ENCODE measurements at regions of chr19 and their contacts with region 1.

Region 1: GRCh38 chr19:1799695-1800342 is 12.3 kb downstream of the ATP8B3 start:
- DNase-seq: no peak
- H3K4me3 ChIP-seq: no peak overlapping the region
- H3K27ac ChIP-seq: no peak overlapping the region
- H3K4me1 ChIP-seq: no peaks in the 10 kb centered on the region
- H3K27me3 ChIP-seq: peaks cover 0 to 15% of the 10 kb centered on the region in 2 donors
- CTCF ChIP-seq: no peak
- POLR2A ChIP-seq: no peak

Region 2: DNA sequence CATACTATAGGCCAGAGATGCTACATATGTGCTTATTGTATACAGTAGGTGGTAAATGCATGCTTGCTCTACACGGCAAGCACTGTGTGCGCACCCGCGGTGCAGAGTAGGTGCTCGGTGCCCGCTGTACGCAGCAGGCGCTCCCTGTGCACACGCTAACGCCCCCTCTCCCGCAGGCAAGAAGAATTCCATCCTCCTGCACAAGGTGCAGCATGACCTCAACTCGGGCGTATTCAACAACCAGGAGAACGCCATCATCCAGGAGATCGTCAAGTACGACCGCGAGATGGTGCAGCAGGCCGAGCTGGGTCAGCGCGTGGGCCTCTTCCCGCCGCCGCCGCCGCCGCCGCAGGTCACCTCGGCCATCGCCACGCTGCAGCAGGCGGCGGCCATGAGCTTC is 1184.2 kb before region 1 on chr19:
- intact Hi-C with region 1: loop called (anchors 5 kb)
- DNase-seq: no peak
- H3K4me3 ChIP-seq: peak overlapping the region in 1 of 3 donors; percentile 46
- H3K27ac ChIP-seq: no peak overlapping the region
- H3K4me1 ChIP-seq: peaks cover 0 to 4% of the 10 kb centered on the region in 2 donors
- H3K27me3 ChIP-seq: no peaks in the 10 kb centered on the region
- CTCF ChIP-seq: no peak
- POLR2A ChIP-seq: no peak

Region 3: GRCh38 chr19:892243-893050 is 907.4 kb before region 1 on chr19:
- intact Hi-C with region 1: no loop called
- DNase-seq: no peak
- H3K4me3 ChIP-seq: peak overlapping the region; percentile 74 to 93 (median 89)
- H3K27ac ChIP-seq: peak overlapping the region; percentile 96
- H3K4me1 ChIP-seq: no peaks in the 10 kb centered on the region
- H3K27me3 ChIP-seq: no peaks in the 10 kb centered on the region
- CTCF ChIP-seq: no peak
- POLR2A ChIP-seq: no peak

Region 4: GRCh38 chr19:2726904-2727639 is 927.3 kb after region 1 on chr19:
- intact Hi-C with region 1: no loop called
- DNase-seq: no peak
- H3K4me3 ChIP-seq: no peak overlapping the region
- H3K27ac ChIP-seq: no peak overlapping the region
- H3K4me1 ChIP-seq: no peaks in the 10 kb centered on the region
- H3K27me3 ChIP-seq: peaks cover 0 to 3% of the 10 kb centered on the region in 2 donors
- CTCF ChIP-seq: no peak
- POLR2A ChIP-seq: no peak